ENCODE measurements at regions of chr1 and their contacts with region 1.

Region 1: DNA sequence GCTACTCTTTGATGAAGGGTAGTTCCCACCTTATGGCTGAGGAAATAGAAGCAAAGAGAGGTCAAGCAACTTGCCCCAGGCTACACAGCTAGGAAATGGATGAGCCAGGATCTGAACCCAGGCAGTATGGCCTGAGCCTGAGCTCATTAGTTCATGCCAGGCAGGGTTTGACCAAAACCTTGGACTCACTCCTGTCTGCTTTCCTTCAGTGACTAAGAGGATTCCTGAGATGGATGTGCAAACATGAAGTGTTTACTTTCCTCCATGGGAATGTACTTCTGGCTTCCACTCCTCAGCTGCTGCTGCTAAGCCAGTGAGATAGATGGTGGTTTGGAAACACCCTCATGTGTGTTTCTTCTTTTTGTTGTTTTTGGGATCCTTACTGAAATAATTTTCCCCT is 35.1 kb upstream of the ERRFI1 start:
- DNase-seq: peak; percentile 97
- H3K4me3 ChIP-seq: no peak overlapping the region
- CTCF ChIP-seq: no peak

Region 2: DNA sequence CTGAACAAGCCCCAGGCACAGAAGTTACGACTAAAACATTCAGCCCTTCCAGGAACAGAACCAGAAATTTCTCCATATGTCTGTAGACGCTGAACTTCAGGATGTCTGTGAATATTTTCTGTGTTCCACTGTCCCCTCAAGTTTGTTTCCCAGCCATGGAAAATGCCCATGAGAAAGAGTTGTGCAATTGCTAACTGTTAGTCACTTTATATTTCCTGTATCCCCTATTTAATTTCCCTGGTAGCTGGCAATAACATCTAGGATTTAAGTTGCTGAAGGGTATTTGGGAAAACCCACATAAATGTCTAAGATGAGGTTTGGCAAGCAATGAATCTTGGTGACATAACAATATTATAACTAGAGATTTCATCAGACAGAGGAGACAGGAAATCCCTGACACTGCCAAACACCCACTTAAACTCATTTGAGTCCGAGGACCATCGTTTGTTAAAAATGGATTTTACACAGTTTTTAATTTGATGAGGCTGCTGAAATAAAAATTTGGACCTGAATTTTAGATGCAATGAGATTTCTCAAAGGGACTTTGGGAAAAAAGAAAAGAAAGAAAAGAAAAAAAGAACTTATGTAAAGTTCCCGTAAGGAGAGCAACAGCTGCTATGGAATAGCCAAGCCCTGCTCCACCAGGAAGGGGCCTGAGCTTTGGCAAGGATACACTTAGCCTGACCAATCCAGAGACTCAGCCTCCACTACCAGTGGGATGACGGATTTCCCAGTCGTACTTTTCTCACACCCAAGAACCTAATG is 13.3 kb before region 1 on chr1:
- CTCF ChIA-PET with region 1: no interaction called
- POLR2A ChIA-PET with region 1: no interaction called
- DNase-seq: peak; percentile 71
- H3K4me3 ChIP-seq: no peak overlapping the region
- CTCF ChIP-seq: no peak

Region 3: GRCh38 chr1:8077120-8077573 is 15.9 kb after region 1 on chr1:
- CTCF ChIA-PET with region 1: interaction called, 10 read pairs
- POLR2A ChIA-PET with region 1: interaction called, 8 read pairs
- DNase-seq: no peak
- H3K4me3 ChIP-seq: no peak overlapping the region
- CTCF ChIP-seq: no peak

Measured in AG04449 (cell line).